ENCODE measurements at regions of chr1 and their contacts with region 1.

Region 1: DNA sequence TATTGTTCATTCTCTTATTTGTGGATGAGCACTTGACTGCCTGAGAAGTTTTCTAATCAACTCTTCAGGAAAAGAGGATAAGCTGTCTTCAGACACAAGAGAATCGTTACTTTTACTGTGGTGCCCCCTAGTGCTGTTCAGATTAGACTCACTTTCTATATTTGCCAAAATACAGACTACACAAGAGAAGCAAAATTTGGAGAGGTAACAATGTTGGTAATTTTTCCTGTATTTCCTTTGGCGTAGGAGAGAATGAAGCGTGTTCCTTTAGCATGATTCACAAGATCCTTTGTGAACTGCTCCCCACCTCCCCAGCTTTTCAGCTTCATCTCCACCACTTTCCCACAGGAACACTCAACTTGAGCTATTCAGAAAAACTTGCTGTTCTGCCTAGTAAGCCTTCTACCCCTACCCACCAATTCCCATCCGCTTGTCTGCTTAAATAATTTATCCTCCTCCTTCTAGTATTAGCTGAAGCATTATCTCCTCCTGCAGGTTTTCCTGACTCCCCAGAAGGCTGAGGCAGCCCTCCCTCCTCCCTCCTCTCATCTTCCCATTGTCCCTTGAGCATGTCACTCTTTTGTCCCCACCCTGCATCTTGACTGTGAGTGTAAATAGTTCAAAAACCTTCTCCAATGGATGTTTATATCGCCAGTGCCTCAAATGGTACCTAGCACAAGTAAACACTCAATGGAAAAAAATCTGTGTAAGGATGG is 4.5 kb downstream of the TNFSF4 start:
- DNase-seq: peak in 3 of 6 donors; percentile 11 to 27 (median 26)
- ATAC-seq: peak; percentile 56 to 86 (median 84)
- H3K4me3 ChIP-seq: no peak overlapping the region
- H3K27ac ChIP-seq: no peak overlapping the region
- H3K4me1 ChIP-seq: no peaks in the 10 kb centered on the region
- H3K27me3 ChIP-seq: no peaks in the 10 kb centered on the region
- CTCF ChIP-seq: peak in 3 of 4 donors; percentile 34 to 51 (median 45)

Region 2: DNA sequence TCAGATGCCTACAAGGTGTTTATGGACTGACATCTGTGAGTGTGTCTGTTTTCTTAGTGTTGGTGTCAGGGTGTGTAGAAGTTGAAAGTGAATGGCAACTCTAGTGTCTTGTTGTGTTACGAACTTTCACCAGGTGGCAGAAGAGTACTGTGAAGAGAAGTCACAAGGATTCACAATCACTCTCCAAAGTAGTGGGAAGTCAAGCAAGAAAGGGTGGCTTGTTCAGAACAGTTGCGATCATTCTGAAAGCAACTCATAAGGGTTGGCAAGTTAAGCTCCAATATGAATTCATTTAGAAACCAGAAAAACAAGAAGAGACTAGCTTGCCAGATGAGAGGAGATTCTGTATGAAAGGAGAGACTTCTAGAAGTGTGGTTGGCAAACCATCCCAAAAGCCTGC is 457.6 kb before region 1 on chr1:
- intact Hi-C with region 1: loop called in 1 of 3 experiments (anchors 10 kb)
- DNase-seq: peak in 1 of 6 donors; percentile 14
- ATAC-seq: peak; percentile 43 to 86 (median 80)
- H3K4me3 ChIP-seq: no peak overlapping the region
- H3K27ac ChIP-seq: no peak overlapping the region
- H3K4me1 ChIP-seq: no peaks in the 10 kb centered on the region
- H3K27me3 ChIP-seq: no peaks in the 10 kb centered on the region
- CTCF ChIP-seq: peak in 2 of 4 donors; percentile 25 to 31

Region 3: GRCh38 chr1:172789866-172790644 is 412.5 kb before region 1 on chr1:
- intact Hi-C with region 1: no loop called
- DNase-seq: no peak
- ATAC-seq: no peak
- H3K4me3 ChIP-seq: no peak overlapping the region
- H3K27ac ChIP-seq: no peak overlapping the region
- H3K4me1 ChIP-seq: no peaks in the 10 kb centered on the region
- H3K27me3 ChIP-seq: no peaks in the 10 kb centered on the region
- CTCF ChIP-seq: no peak

Region 4: GRCh38 chr1:172821609-172822274 is 380.8 kb before region 1 on chr1:
- intact Hi-C with region 1: loop called in 1 of 3 experiments (anchors 5 kb)
- DNase-seq: no peak
- ATAC-seq: no peak
- H3K4me3 ChIP-seq: no peak overlapping the region
- H3K27ac ChIP-seq: no peak overlapping the region
- H3K4me1 ChIP-seq: no peaks in the 10 kb centered on the region
- H3K27me3 ChIP-seq: no peaks in the 10 kb centered on the region
- CTCF ChIP-seq: no peak

Region 5: DNA sequence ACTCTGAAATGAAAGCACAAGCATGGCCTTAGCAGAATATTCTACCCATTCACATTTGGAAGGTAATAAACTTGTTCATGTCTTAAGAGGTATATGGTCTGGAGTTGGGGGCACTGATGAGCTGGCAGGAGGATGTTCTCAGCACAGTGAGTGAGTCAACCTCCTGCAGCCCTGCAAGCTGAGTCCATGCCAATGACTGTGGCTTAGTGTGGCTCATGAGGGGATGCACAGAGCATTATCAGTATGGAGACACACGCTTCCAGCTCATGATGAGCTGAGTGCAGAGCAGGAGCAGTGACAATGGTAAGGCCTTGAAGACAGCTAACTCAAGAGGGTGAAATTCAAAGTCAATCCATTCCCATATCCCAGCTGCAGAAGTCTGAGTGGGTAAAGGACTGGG is 254.1 kb before region 1 on chr1:
- intact Hi-C with region 1: no loop called
- DNase-seq: no peak
- ATAC-seq: no peak
- H3K4me3 ChIP-seq: no peak overlapping the region
- H3K27ac ChIP-seq: no peak overlapping the region
- H3K4me1 ChIP-seq: peaks cover 0 to 7% (median 4%) of the 10 kb centered on the region in 3 donors
- H3K27me3 ChIP-seq: no peaks in the 10 kb centered on the region
- CTCF ChIP-seq: no peak

Measured in pancreas (tissue), 10 donors.